Activated CD4-positive, alpha-beta T cell treated with anti-CD3 and anti-CD28 coated beads, Interleukin-2, amount 10 ng/mL, durations not matched to agents 7 days and 5 days (primary cell): ENCODE measurements at regions of chr21 and their contacts with region 1.

Region 1: DNA sequence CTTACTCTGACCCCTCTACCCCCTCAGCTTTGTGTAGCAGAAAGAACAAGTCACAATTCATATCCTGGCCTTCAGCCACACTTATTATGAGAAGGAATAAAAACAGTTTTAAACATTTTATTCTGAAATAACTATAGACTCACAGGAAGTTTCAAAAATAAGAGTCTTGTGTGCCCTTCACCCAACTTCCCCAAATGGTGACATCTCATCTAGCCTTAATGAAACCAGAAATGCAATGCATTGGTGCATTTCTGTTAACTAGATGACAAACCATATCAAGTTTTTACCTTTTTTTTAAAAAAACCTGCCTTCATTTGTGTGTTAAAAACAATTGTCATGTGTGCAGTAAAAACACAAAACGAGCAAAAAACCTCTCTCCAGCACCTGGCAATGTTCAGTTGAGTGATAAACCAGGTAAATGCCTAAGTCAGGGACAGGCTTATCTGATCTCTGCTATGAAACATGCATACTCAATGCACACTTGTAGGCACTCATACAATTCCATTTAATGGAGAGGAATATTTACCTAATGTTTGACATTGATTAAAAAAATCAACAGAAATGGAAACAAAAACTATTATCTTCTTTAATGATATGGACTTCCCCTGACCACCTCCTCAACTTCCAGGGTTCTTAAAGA is 51.5 kb downstream of the SH3BGR start:
- DNase-seq: no peak
- H3K4me3 Mint-ChIP-seq: no peak overlapping the region
- H3K27ac Mint-ChIP-seq: no peak overlapping the region
- H3K4me1 Mint-ChIP-seq: no peaks in the 10 kb centered on the region
- H3K27me3 Mint-ChIP-seq: no peaks in the 10 kb centered on the region

Region 2: DNA sequence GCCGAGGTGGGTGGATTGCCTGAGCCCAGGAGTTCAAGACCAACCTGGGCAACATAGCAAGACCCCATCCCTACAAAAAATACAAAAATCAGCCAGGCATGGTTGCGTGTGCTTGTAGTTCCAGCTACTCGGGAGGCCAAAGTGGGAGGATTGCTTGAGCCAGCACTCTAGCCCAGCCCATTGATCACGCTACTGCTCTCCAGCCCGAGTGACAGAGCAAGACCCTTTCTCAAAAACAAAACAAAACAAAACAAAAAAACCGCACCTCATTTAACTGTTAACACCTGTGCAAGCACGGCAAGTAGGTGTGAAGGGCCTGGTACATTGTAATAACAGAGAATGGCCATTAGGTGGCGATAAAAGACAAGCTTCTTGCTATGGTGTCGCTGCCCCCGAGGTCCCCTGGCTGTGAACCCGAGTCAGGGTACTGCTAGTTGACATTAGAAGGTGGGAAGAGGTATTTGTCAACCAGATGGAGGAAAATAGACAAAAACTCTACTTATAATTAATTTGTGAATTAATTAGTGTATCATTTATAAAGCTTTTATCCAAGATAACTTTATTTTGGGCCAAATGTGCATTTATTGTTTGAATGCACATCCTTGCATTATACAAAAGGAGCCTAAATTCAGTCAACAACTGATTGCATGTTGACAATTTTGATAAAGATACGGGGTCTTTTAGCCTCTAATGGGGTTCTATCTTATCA is 15.0 kb after region 1 on chr21:
- CTCF ChIA-PET with region 1: no interaction called
- POLR2A ChIA-PET with region 1: interaction called, 15 read pairs
- DNase-seq: peak; percentile 52
- H3K4me3 Mint-ChIP-seq: no peak overlapping the region
- H3K27ac Mint-ChIP-seq: no peak overlapping the region
- H3K4me1 Mint-ChIP-seq: no peaks in the 10 kb centered on the region
- H3K27me3 Mint-ChIP-seq: no peaks in the 10 kb centered on the region